CD4-positive, alpha-beta memory T cell (primary cell): ENCODE measurements at regions of chr15 and their contacts with region 1.

Region 1: DNA sequence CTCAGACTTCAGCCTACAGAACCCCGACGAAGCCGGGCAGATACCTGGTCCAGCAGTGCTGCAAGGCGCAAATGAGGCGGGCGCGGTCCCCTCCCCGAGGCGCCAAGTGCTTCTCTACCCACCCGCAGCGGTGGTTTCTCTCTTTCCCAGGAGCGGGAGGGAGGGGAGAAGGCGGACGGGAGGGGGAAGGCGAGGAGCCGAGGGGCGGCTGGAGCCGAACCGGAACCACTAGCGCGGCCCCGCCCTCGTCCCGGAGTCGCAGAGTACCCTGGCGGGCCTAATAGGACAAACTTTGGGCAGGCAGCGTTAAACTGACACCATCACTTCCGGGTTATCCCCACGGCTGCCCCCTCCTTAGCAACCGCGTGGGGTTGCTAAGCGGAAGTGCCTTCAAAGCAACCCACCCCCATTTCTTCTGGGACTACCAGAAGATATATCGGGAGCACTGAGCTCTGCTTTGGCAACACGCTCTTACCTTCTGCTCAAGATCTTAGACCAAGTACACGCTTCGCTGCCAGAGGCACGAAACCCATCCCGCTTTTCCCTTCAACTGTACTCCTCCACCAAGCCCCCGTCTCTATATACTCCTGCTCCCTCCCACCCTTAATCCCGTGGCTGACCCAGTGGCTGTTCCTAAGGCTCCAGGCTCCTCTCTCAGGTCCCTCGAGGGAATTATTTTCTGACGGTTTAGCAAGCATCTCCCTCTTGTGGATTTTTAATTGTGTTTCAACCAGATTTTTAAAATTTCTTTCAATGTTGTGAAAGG is at the start of gene CSNK1G1:
- DNase-seq: peak; percentile 89 to 94 (median 90)
- H3K4me3 ChIP-seq: peak within 1 kb of the TSS; percentile 76 to 95
- H3K4me3 Mint-ChIP-seq: peak within 1 kb of the TSS; percentile 89 to 99 (median 96)
- H3K27ac ChIP-seq: peak within 1 kb of the TSS; percentile 67
- H3K27ac Mint-ChIP-seq: peak within 1 kb of the TSS; percentile 92 to 97 (median 94)
- H3K4me1 ChIP-seq: peaks cover 21% of the 10 kb centered on the region
- H3K4me1 Mint-ChIP-seq: peaks cover 13 to 25% (median 19%) of the 10 kb centered on the region in 4 donors
- H3K27me3 ChIP-seq: no peaks in the 10 kb centered on the region
- H3K27me3 Mint-ChIP-seq: no peaks in the 10 kb centered on the region
- total RNA-seq, gene CSNK1G1: 27.3 to 27.7 TPM

Region 2: DNA sequence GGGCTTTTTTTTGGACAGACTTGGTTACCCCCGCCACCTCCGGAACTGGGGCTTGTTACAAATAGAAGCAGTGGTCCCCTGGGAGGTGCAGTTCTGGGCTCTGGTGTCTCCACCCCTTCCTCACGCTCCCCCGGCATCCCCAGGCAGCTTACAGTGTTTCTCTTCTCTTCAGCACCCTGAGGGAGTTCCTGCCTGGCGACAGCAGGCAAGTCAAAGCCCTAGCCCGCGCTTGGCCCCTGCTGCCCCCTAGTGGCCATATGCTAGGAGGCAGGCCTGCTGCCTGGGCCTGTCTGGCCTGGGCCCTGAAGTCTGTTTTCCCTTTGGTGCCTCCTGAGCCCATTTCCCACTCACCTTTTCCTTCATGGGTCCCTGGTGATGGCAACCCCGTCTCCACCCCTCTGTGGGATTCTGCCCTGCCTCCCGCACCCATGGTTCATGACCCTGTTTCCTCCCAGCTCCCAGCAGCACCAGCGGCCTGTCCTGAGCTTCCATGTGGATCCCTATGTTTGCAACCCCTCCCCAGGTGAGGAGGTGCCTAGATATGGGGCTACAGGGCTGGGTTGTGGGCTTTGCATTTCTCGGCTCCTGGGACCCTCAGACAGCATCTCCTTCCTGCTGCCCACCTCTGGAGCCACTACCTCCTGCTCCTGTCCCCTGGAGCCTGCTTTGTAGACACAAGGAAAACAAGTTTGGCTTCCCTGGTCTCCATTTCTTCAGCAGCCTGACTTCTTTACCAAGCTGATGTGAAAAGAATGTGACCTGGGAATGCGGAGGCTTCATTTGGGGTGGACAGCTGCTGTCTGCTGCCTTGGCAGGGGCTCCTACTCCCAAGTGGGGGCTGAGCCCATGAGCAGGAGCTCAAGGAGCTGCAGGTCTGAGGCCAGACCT is 202.4 kb before region 1 on chr15:
- CTCF ChIA-PET with region 1: no interaction called
- POLR2A ChIA-PET with region 1: no interaction called
- intact Hi-C with region 1: loop called (anchors 1 kb)
- DNase-seq: peak; percentile 84 to 89 (median 86)
- H3K4me3 ChIP-seq: no peak overlapping the region
- H3K4me3 Mint-ChIP-seq: peak overlapping the region; percentile 72 to 92 (median 80)
- H3K27ac ChIP-seq: peak overlapping the region; percentile 11
- H3K27ac Mint-ChIP-seq: peak overlapping the region in 6 of 7 donors; percentile 18 to 87 (median 76)
- H3K4me1 ChIP-seq: peaks cover 41% of the 10 kb centered on the region
- H3K4me1 Mint-ChIP-seq: peaks cover 19 to 51% (median 32%) of the 10 kb centered on the region in 4 donors
- H3K27me3 ChIP-seq: peaks cover 6% of the 10 kb centered on the region
- H3K27me3 Mint-ChIP-seq: peaks cover 5 to 8% of the 10 kb centered on the region in 2 donors

Region 3: DNA sequence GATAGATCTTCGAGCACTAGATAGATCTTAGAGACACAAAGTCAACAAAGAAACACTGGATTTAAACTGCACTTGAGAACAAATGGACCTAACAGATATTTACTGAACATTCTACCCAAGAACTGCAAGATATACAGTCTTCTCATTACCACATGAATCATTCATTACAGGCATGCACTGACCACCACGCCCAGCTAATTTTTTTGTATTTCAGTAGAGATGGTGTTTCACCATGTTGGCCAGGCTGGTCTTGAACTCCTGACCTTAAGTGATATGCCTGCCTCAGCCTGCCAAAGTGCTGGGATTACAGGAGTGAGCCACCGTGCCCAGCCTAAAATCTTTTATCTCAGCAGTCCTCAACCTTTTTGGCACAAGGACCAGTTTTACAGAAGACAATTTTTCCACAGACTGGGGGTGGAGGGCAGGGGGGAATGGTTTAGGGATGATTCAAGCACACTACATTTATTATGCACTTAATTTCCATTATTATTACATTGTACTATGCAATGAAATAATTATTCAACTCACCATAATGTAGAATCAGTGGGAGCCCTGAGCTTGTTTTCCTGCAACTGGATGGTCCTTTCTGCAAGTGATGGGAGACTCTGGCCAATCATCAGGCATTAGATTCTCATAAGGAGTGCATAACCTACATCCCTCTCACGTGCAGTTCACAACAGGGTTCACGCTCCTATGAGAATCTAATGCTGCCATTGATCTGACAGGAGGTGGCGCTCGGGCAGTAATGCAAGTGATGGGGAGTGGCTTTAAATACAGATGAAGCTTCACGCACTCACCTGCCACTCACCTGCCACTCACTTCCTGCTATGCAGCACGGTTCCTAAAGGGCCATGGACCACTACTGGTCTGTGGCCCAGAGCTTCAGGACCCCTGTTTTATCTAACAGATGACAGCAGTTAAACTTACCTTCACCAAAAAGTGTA is 21.9 kb before region 1 on chr15:
- CTCF ChIA-PET with region 1: interaction called, 3 read pairs
- POLR2A ChIA-PET with region 1: interaction called, 5 read pairs
- intact Hi-C with region 1: loop called (anchors 2 kb)
- DNase-seq: peak; percentile 36 to 70 (median 54)
- H3K4me3 ChIP-seq: no peak overlapping the region
- H3K4me3 Mint-ChIP-seq: peak overlapping the region in 2 of 8 donors; percentile 47 to 62
- H3K27ac ChIP-seq: no peak overlapping the region
- H3K27ac Mint-ChIP-seq: peak overlapping the region; percentile 69 to 92 (median 75)
- H3K4me1 ChIP-seq: peaks cover 32% of the 10 kb centered on the region
- H3K4me1 Mint-ChIP-seq: peaks cover 18 to 32% (median 21%) of the 10 kb centered on the region in 4 donors
- H3K27me3 ChIP-seq: no peaks in the 10 kb centered on the region
- H3K27me3 Mint-ChIP-seq: no peaks in the 10 kb centered on the region

Region 4: GRCh38 chr15:64387562-64388168 is 31.5 kb after region 1 on chr15 and contains the start of gene TRIP4:
- CTCF ChIA-PET with region 1: interaction called, 6 read pairs
- POLR2A ChIA-PET with region 1: interaction called, 28 read pairs
- intact Hi-C with region 1: loop called (anchors 1 kb)
- DNase-seq: peak; percentile 95 to 98 (median 96)
- H3K4me3 ChIP-seq: peak within 1 kb of the TSS; percentile 79 to 89
- H3K4me3 Mint-ChIP-seq: peak within 1 kb of the TSS; percentile 96 to 100 (median 98)
- H3K27ac ChIP-seq: peak within 1 kb of the TSS; percentile 64
- H3K27ac Mint-ChIP-seq: peak within 1 kb of the TSS; percentile 80 to 99 (median 96)
- H3K4me1 ChIP-seq: peaks cover 12% of the 10 kb centered on the region
- H3K4me1 Mint-ChIP-seq: peaks cover 16 to 19% (median 19%) of the 10 kb centered on the region in 4 donors
- H3K27me3 ChIP-seq: no peaks in the 10 kb centered on the region
- H3K27me3 Mint-ChIP-seq: no peaks in the 10 kb centered on the region
- total RNA-seq, gene TRIP4: 28.2 to 29.4 TPM

Region 5: GRCh38 chr15:64702816-64703646 is 346.9 kb after region 1 on chr15:
- CTCF ChIA-PET with region 1: no interaction called
- POLR2A ChIA-PET with region 1: no interaction called
- intact Hi-C with region 1: loop called (anchors 1 kb)
- DNase-seq: peak; percentile 91 to 94 (median 91)
- H3K4me3 ChIP-seq: peak overlapping the region; percentile 54 to 84
- H3K4me3 Mint-ChIP-seq: peak overlapping the region; percentile 79 to 95 (median 92)
- H3K27ac ChIP-seq: peak overlapping the region; percentile 73
- H3K27ac Mint-ChIP-seq: peak overlapping the region; percentile 44 to 95 (median 92)
- H3K4me1 ChIP-seq: peaks cover 52% of the 10 kb centered on the region
- H3K4me1 Mint-ChIP-seq: peaks cover 45 to 59% (median 52%) of the 10 kb centered on the region in 4 donors
- H3K27me3 ChIP-seq: no peaks in the 10 kb centered on the region
- H3K27me3 Mint-ChIP-seq: no peaks in the 10 kb centered on the region